Activated CD4-positive, alpha-beta T cell treated with anti-CD3 and anti-CD28 coated beads for 36 hours (primary cell): ENCODE measurements at regions of chr22 and their contacts with region 1.

Region 1: GRCh38 chr22:29470159-29470855 is 9.7 kb upstream of the NEFH start:
- DNase-seq: peak; percentile 92
- ATAC-seq: peak; percentile 97
- H3K4me3 Mint-ChIP-seq: peak overlapping the region; percentile 48
- H3K27ac Mint-ChIP-seq: peak overlapping the region; percentile 40
- H3K4me1 Mint-ChIP-seq: peaks cover 7% of the 10 kb centered on the region
- H3K27me3 Mint-ChIP-seq: peaks cover 10% of the 10 kb centered on the region

Region 2: GRCh38 chr22:29136782-29137700 is 333.3 kb before region 1 on chr22:
- CTCF ChIA-PET with region 1: no interaction called
- POLR2A ChIA-PET with region 1: no interaction called
- intact Hi-C with region 1: no loop called
- DNase-seq: no peak
- ATAC-seq: no peak
- H3K4me3 Mint-ChIP-seq: no peak overlapping the region
- H3K27ac Mint-ChIP-seq: no peak overlapping the region
- H3K4me1 Mint-ChIP-seq: no peaks in the 10 kb centered on the region
- H3K27me3 Mint-ChIP-seq: peaks cover 8% of the 10 kb centered on the region

Region 3: DNA sequence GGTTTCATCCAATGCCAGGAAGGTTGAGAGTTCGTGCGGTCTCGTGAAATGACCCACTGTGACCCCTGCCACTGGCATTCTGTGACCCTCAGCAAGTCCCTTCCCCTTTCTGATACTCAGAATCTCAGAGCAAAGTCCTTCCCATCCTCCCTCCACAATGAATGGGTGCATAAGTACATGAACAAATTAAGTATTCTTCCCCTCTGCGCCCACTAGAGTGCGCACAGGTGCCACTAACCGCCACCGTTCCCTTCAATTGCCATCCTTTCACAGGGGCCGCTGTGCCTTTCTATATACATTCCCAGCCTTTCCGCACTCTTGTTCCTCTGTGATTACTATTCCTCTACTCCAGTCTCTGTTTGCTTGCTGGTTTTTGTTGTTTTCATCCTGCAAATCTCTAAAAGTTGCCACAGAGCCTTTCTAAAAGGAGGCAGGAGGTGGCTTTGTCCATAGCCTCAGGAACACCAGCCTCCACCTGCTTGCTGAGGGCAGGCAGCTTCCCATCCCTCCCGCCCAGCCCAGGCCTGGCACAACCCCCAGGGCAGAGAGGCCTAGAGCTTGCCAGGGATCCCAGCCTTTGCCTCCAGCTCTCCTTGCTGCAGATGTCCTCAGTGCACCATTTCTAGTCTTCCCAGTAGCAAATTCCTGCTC is 75.3 kb before region 1 on chr22:
- CTCF ChIA-PET with region 1: interaction called, 4 read pairs
- POLR2A ChIA-PET with region 1: no interaction called
- intact Hi-C with region 1: loop called (anchors 1 kb)
- DNase-seq: peak; percentile 82
- ATAC-seq: peak; percentile 97
- H3K4me3 Mint-ChIP-seq: no peak overlapping the region
- H3K27ac Mint-ChIP-seq: no peak overlapping the region
- H3K4me1 Mint-ChIP-seq: peaks cover 2% of the 10 kb centered on the region
- H3K27me3 Mint-ChIP-seq: no peaks in the 10 kb centered on the region

Region 4: DNA sequence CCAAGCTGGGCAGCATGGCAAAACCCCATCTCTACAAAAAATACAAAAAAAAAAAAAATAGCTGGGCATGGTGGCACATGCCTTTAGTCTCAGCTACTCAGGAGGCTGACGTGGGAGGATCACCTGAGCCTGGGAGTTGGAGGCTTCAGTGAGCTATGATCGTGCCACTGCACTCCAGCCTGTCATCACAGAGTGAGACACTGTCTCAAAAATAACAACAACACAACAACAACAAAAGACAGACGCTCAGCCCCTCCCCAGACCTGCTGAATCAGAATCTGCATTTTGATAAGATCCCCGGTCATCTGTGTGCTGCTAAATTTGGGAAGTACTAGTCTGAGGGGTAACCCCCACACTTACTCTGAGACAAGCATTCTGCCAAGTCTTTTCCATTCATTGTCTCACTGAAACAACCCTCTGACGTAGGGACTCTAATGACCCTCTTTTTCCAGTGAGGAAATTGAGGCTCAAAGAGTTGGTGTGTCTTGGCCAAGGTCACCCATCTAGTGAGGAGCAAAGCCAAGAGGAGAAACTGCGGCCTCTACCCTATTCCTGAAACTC is 17.2 kb after region 1 on chr22:
- CTCF ChIA-PET with region 1: interaction called, 10 read pairs
- POLR2A ChIA-PET with region 1: interaction called, 5 read pairs
- intact Hi-C with region 1: no loop called
- DNase-seq: no peak
- ATAC-seq: no peak
- H3K4me3 Mint-ChIP-seq: no peak overlapping the region
- H3K27ac Mint-ChIP-seq: no peak overlapping the region
- H3K4me1 Mint-ChIP-seq: no peaks in the 10 kb centered on the region
- H3K27me3 Mint-ChIP-seq: no peaks in the 10 kb centered on the region

Region 5: GRCh38 chr22:29553351-29554224 is 83.3 kb after region 1 on chr22 and contains the start of gene THOC5:
- CTCF ChIA-PET with region 1: interaction called, 3 read pairs
- POLR2A ChIA-PET with region 1: no interaction called
- intact Hi-C with region 1: loop called in 1 of 2 experiments (anchors 2 kb)
- DNase-seq: peak; percentile 94
- ATAC-seq: peak; percentile 99
- H3K4me3 Mint-ChIP-seq: peak within 1 kb of the TSS; percentile 96
- H3K27ac Mint-ChIP-seq: peak within 1 kb of the TSS; percentile 92
- H3K4me1 Mint-ChIP-seq: peaks cover 13% of the 10 kb centered on the region
- H3K27me3 Mint-ChIP-seq: no peaks in the 10 kb centered on the region
- total RNA-seq, gene THOC5: 52.4 to 65.7 TPM